Heart left ventricle (tissue), 16 donors: ENCODE measurements at regions of chr10 and their contacts with region 1.

Region 1: GRCh38 chr10:128069351-128070051 is 56.7 kb downstream of the MKI67 start:
- DNase-seq: peak; percentile 70 to 85 (median 83)
- ATAC-seq: peak; percentile 50 to 68 (median 66)
- H3K4me3 ChIP-seq: no peak overlapping the region
- H3K27ac ChIP-seq: no peak overlapping the region
- H3K4me1 ChIP-seq: peaks cover 0 to 31% (median 2%) of the 10 kb centered on the region in 12 donors
- H3K27me3 ChIP-seq: no peaks in the 10 kb centered on the region
- CTCF ChIP-seq: peak; percentile 74 to 88 (median 84)
- POLR2A ChIP-seq: no peak

Region 2: GRCh38 chr10:128011175-128011979 is 58.1 kb before region 1 on chr10:
- intact Hi-C with region 1: loop called in 8 of 10 experiments (anchors 2 to 10 kb)
- DNase-seq: peak; percentile 83 to 93 (median 86)
- ATAC-seq: peak; percentile 73 to 88 (median 86)
- H3K4me3 ChIP-seq: peak overlapping the region in 2 of 12 donors; percentile 1 to 2
- H3K27ac ChIP-seq: peak overlapping the region in 1 of 12 donors; percentile 39
- H3K4me1 ChIP-seq: peaks cover 0 to 31% (median 17%) of the 10 kb centered on the region in 12 donors
- H3K27me3 ChIP-seq: no peaks in the 10 kb centered on the region
- CTCF ChIP-seq: peak; percentile 98 to 100 (median 99)
- POLR2A ChIP-seq: no peak

Region 3: DNA sequence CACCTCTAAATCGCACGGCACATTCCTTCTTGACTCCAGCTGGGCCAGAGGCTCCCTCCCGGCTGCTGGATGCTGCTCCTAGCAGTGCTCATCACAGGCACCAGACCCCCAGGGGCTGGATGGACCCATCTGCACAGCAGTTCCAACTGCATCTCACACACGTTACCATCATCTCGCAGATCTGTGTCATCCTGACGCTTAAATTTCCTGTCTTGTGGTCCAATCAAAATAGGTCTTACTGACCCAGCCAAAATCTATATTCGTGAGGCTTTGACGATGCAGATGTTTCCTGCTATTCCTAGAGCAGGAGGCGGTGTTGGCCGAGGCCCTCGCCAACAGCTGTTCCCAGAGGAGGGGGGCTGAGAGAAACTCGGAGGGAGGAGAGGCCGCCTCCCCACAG is 51.3 kb before region 1 on chr10:
- intact Hi-C with region 1: loop called in 6 of 10 experiments (anchors 5 to 10 kb)
- DNase-seq: peak in 2 of 5 donors; percentile 56 to 64
- ATAC-seq: peak in 2 of 4 donors; percentile 70 to 78
- H3K4me3 ChIP-seq: no peak overlapping the region
- H3K27ac ChIP-seq: peak overlapping the region in 1 of 12 donors; percentile 14
- H3K4me1 ChIP-seq: peaks cover 0 to 17% (median 3%) of the 10 kb centered on the region in 12 donors
- H3K27me3 ChIP-seq: no peaks in the 10 kb centered on the region
- CTCF ChIP-seq: no peak
- POLR2A ChIP-seq: no peak

Region 4: DNA sequence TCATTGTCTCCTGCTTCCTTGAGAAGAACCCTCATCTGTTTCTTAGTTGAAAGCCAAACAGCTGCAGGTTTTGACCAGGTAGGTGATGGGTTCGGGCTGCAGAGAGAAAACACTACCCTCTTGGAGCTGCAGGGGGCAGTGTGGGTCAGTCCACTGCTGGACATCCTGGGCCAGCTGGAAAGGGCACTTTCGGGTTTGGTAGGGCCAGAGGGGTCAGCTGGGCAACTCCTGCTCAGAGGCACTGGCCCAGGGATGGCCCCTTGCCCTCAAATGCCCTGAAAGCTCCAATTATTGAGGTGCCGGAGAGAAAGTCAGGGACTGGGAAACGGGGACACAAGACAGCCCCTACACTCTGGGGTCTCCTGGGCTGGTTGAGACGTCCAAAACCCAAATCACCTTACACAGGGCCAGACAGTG is 33.9 kb before region 1 on chr10:
- intact Hi-C with region 1: loop called (anchors 1 to 5 kb)
- DNase-seq: peak in 4 of 5 donors; percentile 47 to 75 (median 58)
- ATAC-seq: peak in 3 of 4 donors; percentile 53 to 74 (median 73)
- H3K4me3 ChIP-seq: no peak overlapping the region
- H3K27ac ChIP-seq: no peak overlapping the region
- H3K4me1 ChIP-seq: peaks cover 0 to 15% (median 3%) of the 10 kb centered on the region in 12 donors
- H3K27me3 ChIP-seq: no peaks in the 10 kb centered on the region
- CTCF ChIP-seq: peak; percentile 66 to 82 (median 70)
- POLR2A ChIP-seq: no peak

Region 5: DNA sequence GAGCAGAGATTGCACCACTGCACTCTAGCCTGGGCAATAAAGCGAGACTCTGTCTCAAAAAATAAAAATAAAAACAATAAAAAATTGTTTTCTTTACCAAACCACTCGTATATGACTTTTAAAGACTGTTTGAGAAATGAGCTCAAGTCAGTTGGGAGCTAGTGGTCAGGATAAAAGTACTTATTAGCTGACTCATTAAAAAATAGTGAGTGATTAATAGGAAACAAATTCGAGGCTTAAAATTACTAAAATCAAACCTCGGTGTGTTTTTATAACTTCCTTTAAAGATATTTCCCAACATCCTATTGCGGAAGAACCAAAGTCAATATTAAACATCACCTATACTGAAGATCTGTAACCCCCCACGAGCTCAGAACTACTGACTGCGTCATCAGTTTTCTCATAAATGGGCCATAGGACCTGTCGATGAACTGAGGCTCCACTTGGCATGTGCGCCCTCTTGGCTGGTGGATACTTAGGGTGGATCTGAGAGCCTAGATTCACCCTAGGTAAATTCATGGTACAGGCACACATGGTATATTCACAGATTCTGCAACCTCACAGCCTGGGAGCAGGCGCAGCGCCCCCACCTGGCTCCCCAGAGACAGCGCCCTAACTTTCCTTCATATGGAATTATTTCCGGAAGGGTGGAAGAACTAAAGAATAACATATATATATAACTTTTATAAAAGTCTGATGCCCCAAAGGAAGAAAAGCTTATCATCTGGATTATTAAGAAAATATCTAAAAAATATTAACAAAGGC is 47.5 kb after region 1 on chr10:
- intact Hi-C with region 1: no loop called
- DNase-seq: no peak
- ATAC-seq: no peak
- H3K4me3 ChIP-seq: no peak overlapping the region
- H3K27ac ChIP-seq: no peak overlapping the region
- H3K4me1 ChIP-seq: no peaks in the 10 kb centered on the region
- H3K27me3 ChIP-seq: peaks cover 0 to 21% (median 0%) of the 10 kb centered on the region in 9 donors
- CTCF ChIP-seq: peak in 1 of 12 donors; percentile 9
- POLR2A ChIP-seq: no peak

Region 6: GRCh38 chr10:128161031-128161430 is 91.5 kb after region 1 on chr10:
- intact Hi-C with region 1: no loop called
- DNase-seq: no peak
- ATAC-seq: no peak
- H3K4me3 ChIP-seq: no peak overlapping the region
- H3K27ac ChIP-seq: no peak overlapping the region
- H3K4me1 ChIP-seq: peaks cover 0 to 9% (median 0%) of the 10 kb centered on the region in 12 donors
- H3K27me3 ChIP-seq: peaks cover 0 to 20% (median 4%) of the 10 kb centered on the region in 9 donors
- CTCF ChIP-seq: no peak
- POLR2A ChIP-seq: no peak